Posterior vena cava (tissue), 2 donors: ENCODE measurements at regions of chr6 and their contacts with region 1.

Region 1: DNA sequence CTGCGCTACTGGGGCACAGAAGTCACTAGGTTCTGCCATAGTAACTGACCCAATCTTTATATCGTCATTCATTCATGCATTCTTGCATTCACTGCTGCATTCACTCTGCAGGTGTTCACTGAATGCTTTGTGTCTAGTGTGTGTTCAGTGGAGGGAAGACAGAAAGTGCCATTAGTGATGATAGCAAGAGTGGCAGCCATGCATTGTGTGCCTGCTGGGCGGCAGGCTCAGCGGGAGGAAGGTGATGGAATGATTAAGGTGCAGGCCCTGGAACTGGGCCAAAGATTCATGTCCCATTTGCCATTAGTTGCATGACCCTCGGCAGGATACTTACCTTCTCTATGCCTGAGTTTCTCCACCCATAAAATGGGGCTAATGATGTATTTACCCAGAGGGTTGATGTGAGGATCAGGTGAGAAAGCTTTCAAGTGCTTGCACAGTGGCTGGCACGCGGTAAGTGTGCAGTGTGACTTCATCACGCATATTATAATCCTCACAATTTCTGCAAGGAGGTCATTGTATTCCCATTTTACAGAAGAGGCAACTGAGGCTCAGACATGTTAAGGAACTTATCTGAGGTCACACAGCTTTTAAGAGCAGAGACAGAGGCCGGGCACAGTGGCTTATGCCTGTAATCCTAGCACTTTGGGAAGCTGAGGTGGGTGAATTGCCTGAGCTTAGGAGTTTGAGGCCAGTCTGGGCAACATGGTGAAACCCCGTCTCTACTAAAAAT is 40.1 kb downstream of the ITPR3 start:
- DNase-seq: no peak

Region 2: GRCh38 chr6:32255199-32256153 is 1405.8 kb before region 1 on chr6:
- intact Hi-C with region 1: loop called in 1 of 2 experiments (anchors 5 kb)
- DNase-seq: peak; percentile 92

Region 3: DNA sequence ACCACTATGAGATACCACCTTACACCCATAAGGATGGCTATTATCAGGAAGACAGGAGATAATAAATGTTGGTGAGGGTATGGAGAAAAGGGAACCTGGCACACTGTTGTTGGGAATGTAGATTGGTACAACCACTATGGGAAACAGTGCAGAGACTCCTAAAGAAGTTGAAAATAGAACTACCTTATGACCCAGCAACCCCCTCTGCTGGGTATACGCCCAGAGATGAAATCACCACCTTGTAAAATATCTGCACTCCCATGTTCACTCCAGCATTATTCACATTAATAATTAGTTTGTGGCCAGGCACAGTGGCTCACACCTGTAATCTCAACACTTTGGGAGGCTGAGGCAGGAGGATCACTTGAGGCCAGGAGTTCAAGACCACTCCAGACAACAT is 180.1 kb before region 1 on chr6:
- intact Hi-C with region 1: no loop called
- DNase-seq: no peak